ENCODE measurements at regions of chr1 and their contacts with region 1.

Region 1: GRCh38 chr1:39738622-39739366 is at the start of gene PPIE:
- DNase-seq: peak; percentile 71 to 88 (median 85)
- ATAC-seq: peak; percentile 99
- H3K4me3 ChIP-seq: peak within 1 kb of the TSS; percentile 88
- H3K4me3 Mint-ChIP-seq: peak within 1 kb of the TSS; percentile 86 to 98 (median 96)
- H3K27ac ChIP-seq: peak within 1 kb of the TSS; percentile 74
- H3K27ac Mint-ChIP-seq: peak within 1 kb of the TSS; percentile 92 to 97 (median 96)
- H3K4me1 ChIP-seq: peaks cover 16 to 17% of the 10 kb centered on the region in 2 donors
- H3K4me1 Mint-ChIP-seq: peaks cover 21 to 44% (median 38%) of the 10 kb centered on the region in 7 donors
- H3K27me3 ChIP-seq: no peaks in the 10 kb centered on the region
- H3K27me3 Mint-ChIP-seq: peaks cover 2 to 16% (median 11%) of the 10 kb centered on the region in 5 donors
- total RNA-seq, gene PPIE: 52.3 to 79.1 (median 61.3) TPM

Region 2: GRCh38 chr1:39478126-39478915 is 260.5 kb before region 1 on chr1:
- CTCF ChIA-PET with region 1: no interaction called
- POLR2A ChIA-PET with region 1: no interaction called
- intact Hi-C with region 1: no loop called
- DNase-seq: no peak
- ATAC-seq: no peak
- H3K4me3 ChIP-seq: no peak overlapping the region
- H3K4me3 Mint-ChIP-seq: no peak overlapping the region
- H3K27ac ChIP-seq: no peak overlapping the region
- H3K27ac Mint-ChIP-seq: peak overlapping the region in 1 of 9 donors; percentile 5
- H3K4me1 ChIP-seq: no peaks in the 10 kb centered on the region
- H3K4me1 Mint-ChIP-seq: peaks cover 0 to 2% (median 0%) of the 10 kb centered on the region in 7 donors
- H3K27me3 ChIP-seq: no peaks in the 10 kb centered on the region
- H3K27me3 Mint-ChIP-seq: no peaks in the 10 kb centered on the region

Region 3: GRCh38 chr1:39691262-39692151 is 47.3 kb before region 1 on chr1 and contains the start of gene HPCAL4:
- CTCF ChIA-PET with region 1: no interaction called
- POLR2A ChIA-PET with region 1: interaction called, 11 read pairs
- intact Hi-C with region 1: loop called (anchors 1 kb)
- DNase-seq: peak; percentile 79 to 93 (median 88)
- ATAC-seq: peak; percentile 93
- H3K4me3 ChIP-seq: peak within 1 kb of the TSS; percentile 89
- H3K4me3 Mint-ChIP-seq: peak within 1 kb of the TSS; percentile 71 to 90 (median 86)
- H3K27ac ChIP-seq: peak within 1 kb of the TSS; percentile 69
- H3K27ac Mint-ChIP-seq: peak within 1 kb of the TSS; percentile 60 to 93 (median 84)
- H3K4me1 ChIP-seq: peaks cover 21 to 36% of the 10 kb centered on the region in 2 donors
- H3K4me1 Mint-ChIP-seq: peaks cover 22 to 48% (median 28%) of the 10 kb centered on the region in 7 donors
- H3K27me3 ChIP-seq: no peaks in the 10 kb centered on the region
- H3K27me3 Mint-ChIP-seq: peaks cover 0 to 63% (median 13%) of the 10 kb centered on the region in 5 donors
- total RNA-seq, gene HPCAL4: 2.9 to 49.0 (median 18.7) TPM

Region 4: GRCh38 chr1:39788758-39789570 is 50.2 kb after region 1 on chr1 and contains the start of gene BMP8B:
- CTCF ChIA-PET with region 1: no interaction called
- POLR2A ChIA-PET with region 1: no interaction called
- intact Hi-C with region 1: loop called in 1 of 2 experiments (anchors 5 kb)
- DNase-seq: peak in 7 of 9 donors; percentile 1 to 62 (median 11)
- ATAC-seq: peak; percentile 81
- H3K4me3 ChIP-seq: peak within 1 kb of the TSS; percentile 46
- H3K4me3 Mint-ChIP-seq: peak within 1 kb of the TSS; percentile 67 to 86 (median 76)
- H3K27ac ChIP-seq: no peak within 1 kb of the TSS
- H3K27ac Mint-ChIP-seq: no peak within 1 kb of the TSS
- H3K4me1 ChIP-seq: peaks cover 0 to 3% of the 10 kb centered on the region in 2 donors
- H3K4me1 Mint-ChIP-seq: peaks cover 3 to 11% (median 7%) of the 10 kb centered on the region in 7 donors
- H3K27me3 ChIP-seq: no peaks in the 10 kb centered on the region
- H3K27me3 Mint-ChIP-seq: peaks cover 6 to 50% (median 23%) of the 10 kb centered on the region in 5 donors
- total RNA-seq, gene BMP8B: 0.16 to 1.4 (median 0.17) TPM

Measured in naive thymus-derived CD4-positive, alpha-beta T cell (primary cell).